Transverse colon (tissue), 4 donors: ENCODE measurements at regions of chr14 and their contacts with region 1.

Region 1: GRCh38 chr14:101808020-101808641 is 46.6 kb downstream of the PPP2R5C start:
- DNase-seq: no peak
- H3K4me3 ChIP-seq: no peak overlapping the region
- H3K27ac ChIP-seq: peak overlapping the region; percentile 8 to 98 (median 92)
- H3K4me1 ChIP-seq: peaks cover 17 to 39% (median 24%) of the 10 kb centered on the region in 4 donors
- H3K27me3 ChIP-seq: no peaks in the 10 kb centered on the region
- CTCF ChIP-seq: no peak
- EP300 ChIP-seq: no peak
- POLR2A ChIP-seq: no peak

Region 2: GRCh38 chr14:101849125-101849524 is 41.0 kb after region 1 on chr14:
- in situ Hi-C with region 1: no loop called
- intact Hi-C with region 1: loop called (anchors 1 kb)
- DNase-seq: peak; percentile 57
- H3K4me3 ChIP-seq: no peak overlapping the region
- H3K27ac ChIP-seq: no peak overlapping the region
- H3K4me1 ChIP-seq: peaks cover 16 to 42% (median 29%) of the 10 kb centered on the region in 4 donors
- H3K27me3 ChIP-seq: no peaks in the 10 kb centered on the region
- CTCF ChIP-seq: no peak
- EP300 ChIP-seq: no peak
- POLR2A ChIP-seq: no peak